Astrocyte of the cerebellum (primary cell): ENCODE measurements at regions of chr1 and their contacts with region 1.

Region 1: GRCh38 chr1:91201176-91201575 is 179.3 kb upstream of the ZNF644 start:
- DNase-seq: no peak
- H3K4me3 ChIP-seq: no peak overlapping the region
- CTCF ChIP-seq: no peak

Region 2: GRCh38 chr1:90402893-90403849 is 798.0 kb before region 1 on chr1:
- in situ Hi-C with region 1: no loop called
- DNase-seq: peak; percentile 100
- H3K4me3 ChIP-seq: no peak overlapping the region
- CTCF ChIP-seq: no peak

Region 3: GRCh38 chr1:91099746-91100621 is 101.2 kb before region 1 on chr1:
- in situ Hi-C with region 1: no loop called
- DNase-seq: no peak
- H3K4me3 ChIP-seq: no peak overlapping the region
- CTCF ChIP-seq: no peak

Region 4: GRCh38 chr1:91141858-91142257 is 59.3 kb before region 1 on chr1:
- in situ Hi-C with region 1: no loop called
- DNase-seq: no peak
- H3K4me3 ChIP-seq: no peak overlapping the region
- CTCF ChIP-seq: no peak

Region 5: GRCh38 chr1:91244737-91245136 is 43.6 kb after region 1 on chr1:
- in situ Hi-C with region 1: loop called (anchors 5 kb)
- DNase-seq: no peak
- H3K4me3 ChIP-seq: no peak overlapping the region
- CTCF ChIP-seq: no peak